Sciatic nerve (tissue), 2 donors: ENCODE measurements at regions of chr6 and their contacts with region 1.

Region 1: DNA sequence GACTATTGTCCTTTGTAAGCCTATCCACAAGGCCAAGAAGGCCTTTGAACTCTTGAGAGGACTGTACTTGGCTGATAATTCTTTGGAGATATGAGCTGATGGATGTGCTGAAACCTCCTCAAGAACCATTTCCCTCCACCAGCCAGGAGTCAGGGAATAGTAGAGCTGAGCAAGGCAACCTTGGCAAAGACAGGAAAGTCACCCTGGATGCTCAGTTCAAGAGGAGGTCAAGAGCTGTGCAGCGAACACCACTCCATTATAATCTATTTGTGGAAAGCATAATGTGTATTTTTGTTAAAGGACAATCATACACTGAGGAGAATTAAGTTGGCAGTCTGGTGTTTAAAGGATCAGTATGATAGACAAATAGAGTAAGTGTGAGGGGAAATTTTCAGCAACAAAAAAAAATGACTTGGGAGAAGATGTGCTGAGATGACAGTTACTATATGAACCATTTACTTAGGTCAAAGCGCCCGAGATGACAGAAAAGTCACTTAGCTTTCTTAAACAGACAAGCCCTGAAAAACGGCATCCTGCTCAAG is 177.2 kb upstream of the COL21A1 start:
- DNase-seq: no peak
- ATAC-seq: peak; percentile 39

Region 2: DNA sequence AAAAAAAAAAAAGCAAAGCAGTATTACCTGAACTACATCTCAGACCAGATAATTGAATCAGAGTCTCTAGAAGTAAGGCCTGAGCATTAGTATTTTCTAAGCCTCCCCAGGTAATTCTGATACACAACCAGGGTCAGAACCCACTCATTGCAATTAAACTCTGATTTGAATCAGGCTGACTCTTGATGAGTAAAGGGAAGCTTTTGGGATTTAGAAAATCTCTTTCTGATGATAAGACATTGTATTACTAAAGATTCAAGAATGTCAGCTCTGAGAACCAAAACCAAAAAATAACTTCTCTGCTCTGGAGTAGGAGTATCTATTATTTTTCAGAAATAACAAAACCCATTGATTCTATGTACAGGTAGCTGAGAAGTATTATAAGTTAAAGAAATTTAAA is 77.1 kb before region 1 on chr6:
- intact Hi-C with region 1: no loop called
- DNase-seq: no peak
- ATAC-seq: no peak

Region 3: GRCh38 chr6:56386717-56387116 is 37.9 kb before region 1 on chr6:
- intact Hi-C with region 1: loop called (anchors 1 kb)
- DNase-seq: no peak
- ATAC-seq: no peak